ENCODE measurements at regions of chr6 and their contacts with region 1.

Region 1: DNA sequence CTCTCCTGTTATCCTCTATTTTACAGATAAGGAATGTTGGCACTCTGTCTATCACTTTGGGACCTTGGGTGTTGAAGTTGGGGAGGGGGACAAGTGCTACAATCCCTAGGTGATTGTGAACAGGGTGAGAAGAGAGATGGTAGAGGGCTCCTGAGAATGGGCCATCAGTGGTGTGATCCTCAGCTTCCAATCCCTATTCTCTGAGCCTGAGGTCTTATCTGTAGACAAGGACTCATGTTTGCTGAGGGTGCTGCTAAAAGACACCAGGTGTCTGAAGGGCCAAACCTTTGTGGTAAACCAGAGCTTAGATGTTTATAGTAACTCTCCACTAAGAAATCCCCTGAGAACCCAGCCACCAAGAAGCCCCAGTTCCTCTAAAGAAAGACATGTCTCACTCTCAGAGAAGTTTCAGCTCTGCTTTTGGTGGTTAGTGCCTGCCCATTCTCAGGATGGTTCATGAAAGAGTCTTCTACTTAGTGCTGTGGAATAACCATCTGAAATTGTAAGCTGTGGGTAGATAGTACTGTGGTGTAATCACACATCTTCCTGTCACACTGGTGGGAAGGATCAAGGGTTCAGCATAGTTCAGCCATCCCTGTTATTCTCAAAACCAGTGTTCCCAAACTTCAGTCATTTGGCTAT is 58.2 kb upstream of the IL20RA start:
- DNase-seq: no peak
- ATAC-seq: peak; percentile 81
- H3K4me3 Mint-ChIP-seq: peak overlapping the region; percentile 80
- H3K27ac Mint-ChIP-seq: peak overlapping the region; percentile 98
- H3K4me1 Mint-ChIP-seq: peaks cover 93% of the 10 kb centered on the region
- H3K27me3 Mint-ChIP-seq: no peaks in the 10 kb centered on the region
- CTCF ChIP-seq: no peak

Region 2: DNA sequence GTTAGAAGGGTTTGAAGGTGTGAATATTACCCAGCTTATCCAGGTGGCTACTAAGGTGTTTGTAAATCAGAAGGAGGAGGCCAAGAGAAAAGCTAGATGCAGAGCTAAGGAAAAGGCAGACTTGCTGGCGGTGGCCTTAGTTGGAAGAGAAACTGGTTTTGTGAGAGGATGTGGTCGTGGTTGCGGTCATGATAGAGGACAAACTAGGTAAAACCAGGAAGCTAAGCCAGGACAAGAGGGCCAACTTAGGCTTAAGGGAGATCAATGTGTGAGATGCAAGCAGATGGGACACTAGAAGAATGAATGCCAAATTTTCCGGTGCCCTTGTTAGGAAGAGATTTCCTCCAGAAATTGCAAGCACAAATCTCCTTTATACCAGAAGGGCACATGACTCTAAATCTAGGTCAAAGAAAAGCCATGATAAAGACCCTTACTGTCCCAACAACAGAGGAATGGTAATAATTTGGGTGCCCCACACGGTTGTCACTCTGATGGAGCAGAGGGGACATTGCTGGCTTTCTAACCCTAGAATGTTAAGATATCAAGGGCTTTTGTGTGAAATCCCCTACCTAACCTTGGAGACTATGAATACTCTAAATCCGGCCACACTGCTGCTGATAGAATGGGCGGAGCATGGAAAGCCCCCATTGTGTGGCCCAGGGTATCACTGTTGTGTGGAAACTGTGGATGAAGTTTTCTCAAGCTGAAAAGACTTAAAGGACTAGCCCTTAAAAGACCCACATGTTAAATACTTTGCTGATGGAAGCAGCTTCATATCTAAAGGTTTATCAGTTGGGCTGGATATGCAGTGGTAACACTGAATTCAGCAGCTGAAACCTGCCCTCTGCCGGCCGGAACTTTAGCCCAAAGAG is 62.6 kb after region 1 on chr6:
- CTCF ChIA-PET with region 1: interaction called, 82 read pairs
- POLR2A ChIA-PET with region 1: interaction called, 45 read pairs
- intact Hi-C with region 1: loop called (anchors 1 kb)
- DNase-seq: peak; percentile 28
- ATAC-seq: peak; percentile 81
- H3K4me3 Mint-ChIP-seq: peak overlapping the region; percentile 45
- H3K27ac Mint-ChIP-seq: peak overlapping the region; percentile 92
- H3K4me1 Mint-ChIP-seq: peaks cover 75% of the 10 kb centered on the region
- H3K27me3 Mint-ChIP-seq: no peaks in the 10 kb centered on the region
- CTCF ChIP-seq: no peak

Region 3: GRCh38 chr6:137202078-137202477 is 99.1 kb after region 1 on chr6:
- CTCF ChIA-PET with region 1: no interaction called
- POLR2A ChIA-PET with region 1: interaction called, 3 read pairs
- intact Hi-C with region 1: loop called (anchors 2 kb)
- DNase-seq: no peak
- ATAC-seq: peak; percentile 89
- H3K4me3 Mint-ChIP-seq: peak overlapping the region; percentile 24
- H3K27ac Mint-ChIP-seq: peak overlapping the region; percentile 65
- H3K4me1 Mint-ChIP-seq: peaks cover 37% of the 10 kb centered on the region
- H3K27me3 Mint-ChIP-seq: no peaks in the 10 kb centered on the region
- CTCF ChIP-seq: no peak

Region 4: GRCh38 chr6:137224799-137225198 is 121.8 kb after region 1 on chr6:
- CTCF ChIA-PET with region 1: interaction called, 8 read pairs
- POLR2A ChIA-PET with region 1: interaction called, 18 read pairs
- intact Hi-C with region 1: loop called (anchors 1 kb)
- DNase-seq: no peak
- ATAC-seq: peak; percentile 85
- H3K4me3 Mint-ChIP-seq: peak overlapping the region; percentile 35
- H3K27ac Mint-ChIP-seq: peak overlapping the region; percentile 85
- H3K4me1 Mint-ChIP-seq: peaks cover 71% of the 10 kb centered on the region
- H3K27me3 Mint-ChIP-seq: no peaks in the 10 kb centered on the region
- CTCF ChIP-seq: no peak

Region 5: GRCh38 chr6:137261393-137262160 is 158.6 kb after region 1 on chr6:
- CTCF ChIA-PET with region 1: no interaction called
- POLR2A ChIA-PET with region 1: interaction called, 6 read pairs
- intact Hi-C with region 1: loop called (anchors 1 kb)
- DNase-seq: no peak
- ATAC-seq: peak; percentile 91
- H3K4me3 Mint-ChIP-seq: peak overlapping the region; percentile 32
- H3K27ac Mint-ChIP-seq: peak overlapping the region; percentile 74
- H3K4me1 Mint-ChIP-seq: peaks cover 40% of the 10 kb centered on the region
- H3K27me3 Mint-ChIP-seq: no peaks in the 10 kb centered on the region
- CTCF ChIP-seq: no peak

Region 6: DNA sequence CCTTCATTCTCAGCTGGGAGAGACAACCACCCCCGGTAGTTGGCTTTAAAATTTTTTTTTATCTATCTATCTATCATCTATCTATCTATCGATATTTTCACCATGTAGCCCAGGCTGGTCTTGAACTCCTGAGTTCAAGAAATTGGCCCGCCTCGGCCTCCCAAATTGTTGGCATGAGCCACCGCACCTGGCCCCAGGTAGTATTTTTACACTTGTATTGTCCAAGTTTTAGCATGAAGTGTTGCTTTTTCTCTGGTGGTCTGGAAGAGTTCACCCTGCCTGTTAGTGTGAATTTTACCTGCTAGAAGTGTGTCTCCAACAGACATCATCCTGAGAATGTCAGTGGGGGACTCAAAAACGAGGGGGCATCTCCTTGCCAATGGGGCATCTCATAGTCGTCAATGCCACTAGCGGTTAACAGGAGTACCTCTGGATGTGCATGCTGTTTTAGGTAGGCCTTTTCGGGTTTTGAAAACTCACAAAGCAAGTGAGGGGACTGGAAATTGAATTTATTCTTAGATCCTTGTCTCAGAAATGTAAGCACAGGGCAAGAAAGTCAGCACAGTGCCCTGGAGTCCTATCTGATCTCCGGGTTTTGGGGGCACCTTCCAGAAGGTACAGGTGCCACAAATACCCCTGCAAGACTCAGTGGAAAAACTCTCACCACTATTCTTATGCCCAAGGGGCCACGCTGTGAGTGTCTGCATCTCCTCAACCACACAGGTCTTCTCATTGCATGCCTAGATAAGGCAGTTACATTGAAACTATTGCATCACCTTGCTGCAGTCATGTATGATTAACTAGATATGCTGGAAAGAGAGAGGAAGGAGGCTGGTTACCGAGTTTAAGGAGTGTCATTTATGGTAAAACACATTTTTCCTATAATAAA is 801.2 kb after region 1 on chr6:
- CTCF ChIA-PET with region 1: no interaction called
- POLR2A ChIA-PET with region 1: no interaction called
- intact Hi-C with region 1: loop called (anchors 10 kb)
- DNase-seq: no peak
- ATAC-seq: peak; percentile 84
- H3K4me3 Mint-ChIP-seq: peak overlapping the region; percentile 59
- H3K27ac Mint-ChIP-seq: peak overlapping the region; percentile 79
- H3K4me1 Mint-ChIP-seq: peaks cover 43% of the 10 kb centered on the region
- H3K27me3 Mint-ChIP-seq: no peaks in the 10 kb centered on the region
- CTCF ChIP-seq: no peak